ENCODE measurements at regions of chr11 and their contacts with region 1.

Region 1: GRCh38 chr11:2885676-2886081 is at the start of gene CDKN1C:
- DNase-seq: peak; percentile 93
- total RNA-seq, gene CDKN1C: 11.5 TPM

Region 2: DNA sequence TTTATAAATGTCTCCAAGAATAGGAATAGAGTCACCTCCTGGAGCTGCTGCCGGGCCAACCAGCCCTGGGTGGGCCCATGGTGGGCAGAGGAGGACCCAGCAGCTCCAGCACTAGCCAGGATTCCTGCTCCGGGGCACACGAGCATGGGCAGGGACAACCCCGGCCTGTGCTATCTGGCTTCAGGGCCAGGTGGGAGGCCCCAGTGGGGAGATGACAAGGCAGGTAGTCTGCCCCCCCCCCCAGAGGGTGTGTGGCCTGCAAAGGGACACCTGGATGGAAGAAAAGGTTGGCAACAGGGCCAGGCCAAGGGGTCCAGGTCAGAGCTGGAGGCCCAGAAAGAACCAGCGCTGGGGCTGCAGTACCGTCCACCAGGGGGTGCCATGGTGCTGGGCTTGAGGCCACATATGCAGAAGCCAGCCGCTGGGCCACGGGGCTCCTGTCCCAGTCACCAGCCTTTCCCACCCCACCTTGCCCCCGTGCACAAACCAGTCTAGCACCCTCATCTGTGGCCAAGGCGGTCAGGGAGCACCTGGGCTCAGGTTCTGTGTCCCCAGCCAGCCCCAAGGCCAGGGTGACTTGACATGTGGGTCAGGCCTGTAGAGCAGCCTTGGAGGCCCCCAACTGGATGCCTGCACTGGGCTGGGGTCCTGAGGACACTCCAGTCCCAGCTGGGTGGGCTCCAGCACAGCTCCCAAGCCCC is 580.4 kb before region 1 on chr11:
- intact Hi-C with region 1: loop called (anchors 10 kb)
- DNase-seq: peak; percentile 96

Region 3: DNA sequence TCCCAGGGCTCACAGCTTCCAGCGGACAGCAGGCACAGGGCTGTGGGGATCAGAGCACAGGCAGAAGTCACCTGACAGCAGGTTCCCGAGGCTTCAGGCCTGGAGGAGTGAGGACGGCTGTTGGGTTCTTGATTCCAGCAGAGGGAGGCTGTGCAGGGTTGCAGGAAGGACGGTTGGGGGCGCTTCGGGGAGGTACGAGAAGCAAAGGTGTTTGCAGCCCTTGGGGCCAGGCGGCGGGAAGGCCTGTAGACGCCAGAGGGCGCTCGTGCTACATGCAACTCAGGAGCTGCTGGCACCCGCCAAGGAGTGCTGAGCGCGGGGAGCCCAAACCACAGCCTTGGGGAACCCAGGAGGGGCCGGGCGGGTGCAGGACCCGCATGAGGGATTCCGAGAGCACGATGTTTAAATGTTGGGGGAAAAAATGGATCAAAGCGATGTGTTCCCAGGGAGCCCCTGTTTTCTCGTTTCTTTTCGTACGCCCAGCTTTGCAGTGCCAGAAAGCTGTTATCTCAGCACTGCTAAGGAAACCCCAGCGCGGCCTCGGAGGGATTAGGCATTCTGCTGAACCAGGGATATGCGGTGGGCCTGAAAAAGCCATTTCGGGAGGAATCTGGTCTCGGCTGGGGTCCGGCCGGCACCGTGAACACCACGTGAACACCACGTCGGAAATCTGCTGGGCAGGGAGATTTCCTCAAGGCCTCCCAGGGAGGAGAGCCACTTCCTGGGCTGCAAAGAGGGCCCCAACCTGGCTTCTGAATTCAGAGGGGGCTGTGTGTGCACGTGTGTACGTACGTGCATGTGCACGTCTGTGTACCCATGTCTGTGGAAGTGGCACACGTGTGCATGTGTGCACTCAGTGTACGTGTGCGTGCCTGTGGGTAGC is 352.7 kb before region 1 on chr11:
- intact Hi-C with region 1: loop called (anchors 1 kb)
- DNase-seq: peak; percentile 94

Region 4: DNA sequence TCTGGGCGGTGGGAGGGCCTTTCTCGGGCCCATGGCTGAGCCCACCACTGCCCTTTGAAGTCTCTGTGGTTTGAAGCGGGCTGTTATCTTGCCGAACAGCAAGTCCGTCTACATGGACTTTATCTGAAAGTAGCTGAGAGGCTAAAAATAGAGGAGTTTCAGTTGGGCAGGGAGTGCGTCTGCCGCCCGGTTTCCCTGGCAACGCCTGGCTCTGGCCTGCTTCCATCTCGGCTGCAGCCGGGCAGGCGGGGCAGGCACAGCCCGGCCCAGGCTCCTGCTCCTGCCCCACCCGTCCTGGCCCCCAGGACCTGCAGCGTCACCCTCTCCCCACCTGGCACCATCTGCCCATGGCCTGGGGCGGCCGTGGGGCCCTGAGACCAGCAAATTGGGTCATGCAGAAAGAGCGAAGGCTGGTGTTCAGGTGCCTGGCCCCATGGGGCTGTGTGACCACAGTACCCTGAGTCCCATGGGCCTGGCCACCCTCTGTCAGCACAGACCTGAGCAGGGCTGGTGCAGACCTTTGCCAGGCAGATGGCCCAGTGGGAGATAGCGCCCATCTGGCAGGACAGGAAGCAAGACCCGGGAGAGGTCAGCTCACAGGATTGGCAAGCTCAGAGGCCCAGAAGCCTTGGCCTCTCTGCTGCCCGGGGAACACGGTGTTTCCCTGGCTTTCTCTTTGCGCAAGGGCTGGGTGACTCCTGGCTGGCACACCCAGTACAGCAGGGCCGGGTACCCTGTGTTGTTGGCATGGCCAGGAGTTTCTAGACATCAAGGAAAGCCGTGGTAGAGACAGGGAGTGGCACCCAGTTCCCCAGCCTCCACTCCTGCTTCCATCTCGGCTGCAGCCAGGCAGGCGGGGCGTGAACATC is 106.8 kb before region 1 on chr11:
- intact Hi-C with region 1: loop called (anchors 5 kb)
- DNase-seq: peak; percentile 89

Region 5: GRCh38 chr11:2826679-2827056 is 59.0 kb before region 1 on chr11:
- intact Hi-C with region 1: no loop called
- DNase-seq: no peak

Region 6: DNA sequence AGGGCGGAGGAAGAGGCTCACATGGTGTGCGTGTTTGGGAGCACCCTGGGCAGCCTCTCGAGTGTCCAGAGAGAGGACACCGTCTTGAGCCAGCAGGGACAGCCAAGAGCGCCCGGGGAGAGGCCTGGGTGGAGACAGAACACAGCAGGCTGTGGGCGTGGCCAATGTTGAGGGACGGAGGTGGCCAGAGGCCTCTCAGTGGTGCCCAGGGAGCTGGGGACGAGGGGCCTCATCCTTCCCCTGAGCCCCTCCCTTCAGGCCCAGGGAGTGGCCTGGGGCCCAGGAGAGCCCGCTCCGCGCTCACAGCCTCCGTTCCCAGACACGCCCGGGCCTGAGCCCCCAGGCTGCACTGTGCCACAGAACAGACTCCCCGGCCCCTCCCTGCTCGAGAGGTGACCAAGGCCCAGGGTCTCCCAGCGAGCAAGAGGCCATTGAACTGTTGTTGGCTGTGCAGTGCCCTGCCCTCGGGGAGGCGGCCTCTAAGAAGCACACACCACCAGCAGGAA is 48.5 kb before region 1 on chr11:
- intact Hi-C with region 1: loop called (anchors 5 kb)
- DNase-seq: peak; percentile 87

Region 7: GRCh38 chr11:2963112-2963817 is 77.6 kb after region 1 on chr11:
- intact Hi-C with region 1: no loop called
- DNase-seq: no peak